Activated CD8-positive, alpha-beta T cell treated with anti-CD3 and anti-CD28 coated beads for 36 hours (primary cell): ENCODE measurements at regions of chr2 and their contacts with region 1.

Region 1: GRCh38 chr2:215949991-215950404 is 63.4 kb downstream of the MREG start:
- DNase-seq: no peak
- ATAC-seq: peak; percentile 84
- H3K4me3 Mint-ChIP-seq: no peak overlapping the region
- H3K27ac Mint-ChIP-seq: no peak overlapping the region
- H3K4me1 Mint-ChIP-seq: peaks cover 2% of the 10 kb centered on the region
- H3K27me3 Mint-ChIP-seq: no peaks in the 10 kb centered on the region
- CTCF ChIP-seq: peak; percentile 5

Region 2: DNA sequence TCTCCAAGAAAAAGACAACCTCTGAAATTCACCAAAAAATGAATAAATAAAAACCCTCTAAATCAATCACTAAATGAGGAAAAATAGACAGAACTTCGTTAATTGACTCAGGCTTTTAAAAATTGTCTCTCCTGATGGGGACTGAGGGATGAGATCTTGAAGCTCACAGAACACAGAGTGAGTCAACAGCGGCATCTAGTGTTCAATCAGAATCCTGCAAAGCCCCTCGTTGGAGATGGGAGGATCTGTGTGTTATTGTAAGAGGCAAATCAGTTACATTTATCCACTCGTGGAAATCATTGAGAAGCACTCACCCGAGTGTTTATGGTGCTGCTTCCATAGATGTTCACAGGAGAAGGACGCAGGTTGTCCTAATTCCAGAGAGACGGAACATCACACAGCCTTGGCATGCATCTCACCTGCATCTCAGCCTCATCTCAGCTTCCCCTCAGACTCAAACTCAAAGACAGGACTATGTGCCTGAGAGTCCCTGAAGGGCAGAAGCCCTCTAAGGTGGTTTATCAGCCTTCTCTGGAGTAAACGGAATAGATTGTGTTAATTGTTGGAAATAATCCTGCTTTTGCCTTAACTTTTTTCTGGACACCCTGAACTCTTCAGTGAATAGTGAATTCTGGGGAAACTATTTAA is 18.6 kb before region 1 on chr2:
- CTCF ChIA-PET with region 1: interaction called, 28 read pairs
- POLR2A ChIA-PET with region 1: no interaction called
- intact Hi-C with region 1: no loop called
- DNase-seq: peak; percentile 72
- ATAC-seq: peak; percentile 82
- H3K4me3 Mint-ChIP-seq: no peak overlapping the region
- H3K27ac Mint-ChIP-seq: no peak overlapping the region
- H3K4me1 Mint-ChIP-seq: peaks cover 9% of the 10 kb centered on the region
- H3K27me3 Mint-ChIP-seq: no peaks in the 10 kb centered on the region
- CTCF ChIP-seq: peak; percentile 97

Region 3: GRCh38 chr2:216006164-216006663 is 56.2 kb after region 1 on chr2:
- CTCF ChIA-PET with region 1: interaction called, 17 read pairs
- POLR2A ChIA-PET with region 1: no interaction called
- intact Hi-C with region 1: loop called (anchors 5 kb)
- DNase-seq: peak; percentile 72
- ATAC-seq: peak; percentile 71
- H3K4me3 Mint-ChIP-seq: peak overlapping the region; percentile 27
- H3K27ac Mint-ChIP-seq: peak overlapping the region; percentile 70
- H3K4me1 Mint-ChIP-seq: peaks cover 50% of the 10 kb centered on the region
- H3K27me3 Mint-ChIP-seq: no peaks in the 10 kb centered on the region
- CTCF ChIP-seq: no peak

Region 4: DNA sequence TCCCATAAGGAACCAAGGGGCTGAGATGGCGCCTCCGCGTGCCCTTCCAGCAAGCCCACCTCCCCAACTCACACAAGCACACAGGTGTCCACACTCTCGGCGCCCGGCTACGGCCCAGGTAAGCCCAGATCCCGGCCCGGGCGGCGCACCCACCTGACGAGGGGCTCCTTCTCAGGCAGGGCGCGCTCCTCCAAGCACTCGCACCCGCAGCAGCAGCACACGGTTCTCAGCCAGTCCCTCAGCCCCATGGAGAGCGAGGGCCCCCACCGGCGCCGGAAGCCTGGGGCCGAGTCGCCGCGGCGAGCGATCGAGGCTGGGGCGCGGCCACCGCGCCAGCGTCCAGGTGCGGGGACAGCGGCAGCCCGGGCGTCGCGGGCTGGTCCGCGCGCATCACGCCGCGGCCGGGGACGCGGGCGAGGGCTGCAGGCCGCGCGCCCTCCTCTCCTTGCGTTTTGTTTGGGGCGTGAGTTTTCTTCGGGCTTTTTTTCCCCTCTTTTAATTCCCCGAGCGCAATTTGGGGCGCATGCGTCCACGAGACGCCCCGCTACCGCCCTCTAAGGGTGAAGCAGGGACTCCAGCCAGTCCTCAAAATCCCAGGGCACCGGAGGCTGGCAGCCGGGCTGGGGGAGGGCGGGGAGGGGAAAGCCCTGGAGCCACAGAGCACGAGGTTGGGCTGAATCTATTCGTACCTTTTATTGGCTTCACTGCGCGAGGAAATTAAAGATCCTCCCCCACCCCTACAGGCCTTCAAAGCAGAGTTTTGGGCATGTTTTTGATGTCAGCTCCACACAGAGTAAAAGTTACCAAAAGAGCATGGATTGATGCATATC is 63.3 kb after region 1 on chr2 and contains the start of gene MREG:
- CTCF ChIA-PET with region 1: interaction called, 18 read pairs
- POLR2A ChIA-PET with region 1: no interaction called
- intact Hi-C with region 1: loop called (anchors 5 kb)
- DNase-seq: peak; percentile 90
- ATAC-seq: peak; percentile 76
- H3K4me3 Mint-ChIP-seq: peak within 1 kb of the TSS; percentile 93
- H3K27ac Mint-ChIP-seq: peak within 1 kb of the TSS; percentile 79
- H3K4me1 Mint-ChIP-seq: peaks cover 64% of the 10 kb centered on the region
- H3K27me3 Mint-ChIP-seq: no peaks in the 10 kb centered on the region
- CTCF ChIP-seq: peak; percentile 68
- total RNA-seq, gene MREG: 8.0 to 10.9 TPM

Region 5: GRCh38 chr2:216023055-216023648 is 73.2 kb after region 1 on chr2:
- CTCF ChIA-PET with region 1: interaction called, 89 read pairs
- POLR2A ChIA-PET with region 1: interaction called, 3 read pairs
- intact Hi-C with region 1: loop called (anchors 1 kb)
- DNase-seq: peak; percentile 70
- ATAC-seq: peak; percentile 96
- H3K4me3 Mint-ChIP-seq: no peak overlapping the region
- H3K27ac Mint-ChIP-seq: no peak overlapping the region
- H3K4me1 Mint-ChIP-seq: peaks cover 8% of the 10 kb centered on the region
- H3K27me3 Mint-ChIP-seq: no peaks in the 10 kb centered on the region
- CTCF ChIP-seq: peak; percentile 70